HEK293 (cell line): ENCODE measurements at regions of chr1 and their contacts with region 1.

Region 1: GRCh38 chr1:14148526-14148925 is 448.5 kb downstream of the PRDM2 start:
- H3K4me3 ChIP-seq: no peak overlapping the region
- H3K27ac ChIP-seq: no peak overlapping the region
- H3K4me1 ChIP-seq: no peaks in the 10 kb centered on the region
- CTCF ChIP-seq: no peak

Region 2: DNA sequence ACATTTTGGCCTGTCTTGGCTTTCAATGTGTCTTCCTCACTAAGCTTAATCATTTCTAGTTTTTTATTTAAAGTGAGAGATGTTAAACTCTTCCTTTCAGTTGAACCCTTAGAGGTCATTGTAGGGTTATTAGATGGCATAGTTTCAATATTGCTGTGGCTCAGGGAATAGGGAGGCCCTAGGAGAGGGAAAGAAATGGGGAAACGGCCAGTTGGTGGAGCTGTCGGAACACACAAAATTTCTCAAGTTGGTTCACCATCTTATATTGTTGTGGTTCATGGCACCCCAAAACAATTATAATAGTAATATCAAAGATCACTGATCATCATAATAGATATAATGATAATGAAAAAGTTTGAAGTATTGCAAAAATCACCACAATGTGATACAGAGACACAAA is 418.5 kb after region 1 on chr1:
- CTCF ChIA-PET with region 1: no interaction called
- POLR2A ChIA-PET with region 1: interaction called, 12 read pairs
- H3K4me3 ChIP-seq: no peak overlapping the region
- H3K27ac ChIP-seq: no peak overlapping the region
- H3K4me1 ChIP-seq: no peaks in the 10 kb centered on the region
- CTCF ChIP-seq: no peak